ENCODE measurements at regions of chr18 and their contacts with region 1.

Region 1: GRCh38 chr18:79378542-79379250 is 17.0 kb upstream of the NFATC1 start:
- DNase-seq: peak; percentile 74
- ATAC-seq: peak; percentile 71
- H3K4me3 Mint-ChIP-seq: peak overlapping the region; percentile 46
- H3K27ac Mint-ChIP-seq: peak overlapping the region; percentile 50
- H3K4me1 Mint-ChIP-seq: peaks cover 26% of the 10 kb centered on the region
- H3K27me3 Mint-ChIP-seq: no peaks in the 10 kb centered on the region
- CTCF ChIP-seq: peak; percentile 81

Region 2: DNA sequence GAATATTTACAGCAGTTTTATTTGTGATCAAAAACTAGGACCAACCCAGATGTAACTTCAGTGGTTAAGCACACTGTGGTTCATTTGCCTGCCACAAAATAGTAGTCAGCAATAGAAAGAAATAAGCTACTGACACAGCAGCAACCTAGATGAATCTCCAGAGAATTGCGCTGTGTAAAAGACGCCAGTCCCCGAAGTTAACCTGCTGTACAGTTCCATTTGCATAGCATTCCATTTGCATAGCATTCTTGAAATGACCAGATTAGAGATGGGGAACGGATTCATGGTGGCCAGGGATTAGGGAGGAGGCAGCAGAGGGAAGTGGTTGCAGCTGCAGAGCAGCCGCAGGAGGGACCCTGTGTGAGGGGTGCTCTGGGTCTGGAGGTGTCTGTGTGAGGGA is 22.3 kb before region 1 on chr18:
- CTCF ChIA-PET with region 1: no interaction called
- POLR2A ChIA-PET with region 1: interaction called, 6 read pairs
- intact Hi-C with region 1: loop called (anchors 1 kb)
- DNase-seq: no peak
- ATAC-seq: peak; percentile 89
- H3K4me3 Mint-ChIP-seq: no peak overlapping the region
- H3K27ac Mint-ChIP-seq: peak overlapping the region; percentile 70
- H3K4me1 Mint-ChIP-seq: peaks cover 16% of the 10 kb centered on the region
- H3K27me3 Mint-ChIP-seq: no peaks in the 10 kb centered on the region
- CTCF ChIP-seq: no peak

Region 3: GRCh38 chr18:79484661-79485621 is 106.2 kb after region 1 on chr18:
- CTCF ChIA-PET with region 1: no interaction called
- POLR2A ChIA-PET with region 1: no interaction called
- intact Hi-C with region 1: no loop called
- DNase-seq: no peak
- ATAC-seq: no peak
- H3K4me3 Mint-ChIP-seq: no peak overlapping the region
- H3K27ac Mint-ChIP-seq: no peak overlapping the region
- H3K4me1 Mint-ChIP-seq: peaks cover 2% of the 10 kb centered on the region
- H3K27me3 Mint-ChIP-seq: no peaks in the 10 kb centered on the region
- CTCF ChIP-seq: no peak

Region 4: GRCh38 chr18:79523736-79524180 is 145.1 kb after region 1 on chr18:
- CTCF ChIA-PET with region 1: interaction called, 99 read pairs
- POLR2A ChIA-PET with region 1: interaction called, 5 read pairs
- intact Hi-C with region 1: loop called (anchors 1 kb)
- DNase-seq: no peak
- ATAC-seq: peak; percentile 63
- H3K4me3 Mint-ChIP-seq: peak overlapping the region; percentile 81
- H3K27ac Mint-ChIP-seq: peak overlapping the region; percentile 91
- H3K4me1 Mint-ChIP-seq: peaks cover 64% of the 10 kb centered on the region
- H3K27me3 Mint-ChIP-seq: no peaks in the 10 kb centered on the region
- CTCF ChIP-seq: no peak

Region 5: DNA sequence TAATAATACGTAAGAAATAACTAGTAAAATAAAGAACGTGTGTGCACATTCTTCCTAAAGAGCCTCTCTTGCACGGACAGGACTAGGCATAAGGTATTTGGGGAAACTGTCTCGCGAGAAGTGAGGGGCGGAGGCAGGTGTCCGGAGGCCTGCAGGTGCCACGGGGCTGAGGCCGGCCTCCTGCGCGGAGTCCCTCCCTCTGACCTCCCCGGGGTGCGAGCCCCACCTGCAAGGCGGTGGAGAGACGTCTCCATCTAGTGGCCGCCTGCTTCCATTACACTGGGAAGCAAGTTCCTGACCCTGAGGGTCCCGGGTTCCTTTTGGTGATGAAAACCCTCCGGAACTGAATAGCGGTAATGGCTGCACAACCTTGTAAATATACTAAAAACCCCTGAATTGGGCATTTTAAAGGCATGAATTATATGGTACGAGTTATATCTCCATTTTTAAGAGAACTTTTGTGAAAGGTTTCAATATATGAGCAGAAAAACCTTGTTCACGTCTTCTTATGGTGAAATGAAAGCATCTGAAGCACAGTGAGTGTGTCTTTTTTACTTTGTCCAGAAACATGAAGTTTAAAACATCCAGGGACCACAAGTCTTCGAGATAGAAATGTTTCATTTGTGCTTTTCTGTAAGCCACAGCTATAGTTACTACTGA is 265.4 kb after region 1 on chr18:
- CTCF ChIA-PET with region 1: interaction called, 86 read pairs
- POLR2A ChIA-PET with region 1: interaction called, 7 read pairs
- intact Hi-C with region 1: loop called (anchors 1 kb)
- DNase-seq: peak; percentile 68
- ATAC-seq: peak; percentile 93
- H3K4me3 Mint-ChIP-seq: no peak overlapping the region
- H3K27ac Mint-ChIP-seq: no peak overlapping the region
- H3K4me1 Mint-ChIP-seq: peaks cover 24% of the 10 kb centered on the region
- H3K27me3 Mint-ChIP-seq: no peaks in the 10 kb centered on the region
- CTCF ChIP-seq: peak; percentile 97

Region 6: DNA sequence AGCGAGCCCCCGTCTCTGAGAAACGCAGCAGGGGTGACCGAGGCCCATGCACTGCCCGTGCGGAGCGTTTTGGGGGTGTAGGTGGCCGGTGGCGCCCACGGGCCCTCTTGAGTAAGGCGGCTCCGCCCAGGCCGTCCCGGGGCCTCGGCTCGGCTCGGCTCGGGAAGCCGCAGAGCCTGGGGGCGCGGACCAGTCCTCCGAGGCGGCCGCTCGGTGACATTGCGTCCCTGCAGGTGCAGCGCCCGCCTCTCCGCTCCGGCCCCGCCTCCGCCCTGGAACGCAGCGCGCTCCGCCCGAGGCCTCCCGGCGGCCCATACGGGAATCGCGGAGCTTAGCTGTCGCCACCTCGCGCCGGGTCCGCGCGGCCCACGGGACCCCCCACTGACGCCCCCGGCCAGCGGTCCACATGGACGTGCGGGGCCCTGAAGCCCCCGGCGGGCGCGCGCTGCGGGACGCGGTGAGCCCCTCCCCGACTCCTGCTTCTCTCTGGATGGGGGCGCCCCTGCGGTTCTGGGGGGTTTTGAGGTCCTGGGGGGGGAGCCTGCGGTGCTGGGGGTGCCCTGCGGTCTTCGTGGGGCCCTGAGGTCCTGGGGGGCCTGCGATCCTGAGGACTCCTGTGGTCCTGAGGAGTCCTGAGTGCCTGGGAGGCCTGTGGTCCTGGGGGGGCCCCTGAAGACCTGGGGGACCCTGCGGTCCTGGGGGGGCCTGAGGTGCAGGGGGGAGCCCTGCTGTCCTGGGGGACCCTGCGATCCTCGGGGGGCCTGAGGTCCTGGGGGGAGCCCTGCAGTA is 585.8 kb after region 1 on chr18 and contains the start of gene HSBP1L1:
- CTCF ChIA-PET with region 1: no interaction called
- POLR2A ChIA-PET with region 1: no interaction called
- intact Hi-C with region 1: loop called (anchors 5 kb)
- DNase-seq: peak; percentile 56
- ATAC-seq: peak; percentile 83
- H3K4me3 Mint-ChIP-seq: peak within 1 kb of the TSS; percentile 74
- H3K27ac Mint-ChIP-seq: no peak within 1 kb of the TSS
- H3K4me1 Mint-ChIP-seq: peaks cover 37% of the 10 kb centered on the region
- H3K27me3 Mint-ChIP-seq: peaks cover 2% of the 10 kb centered on the region
- CTCF ChIP-seq: no peak
- total RNA-seq, gene HSBP1L1: 0.98 and 2.5 TPM in 2 replicates

Region 7: DNA sequence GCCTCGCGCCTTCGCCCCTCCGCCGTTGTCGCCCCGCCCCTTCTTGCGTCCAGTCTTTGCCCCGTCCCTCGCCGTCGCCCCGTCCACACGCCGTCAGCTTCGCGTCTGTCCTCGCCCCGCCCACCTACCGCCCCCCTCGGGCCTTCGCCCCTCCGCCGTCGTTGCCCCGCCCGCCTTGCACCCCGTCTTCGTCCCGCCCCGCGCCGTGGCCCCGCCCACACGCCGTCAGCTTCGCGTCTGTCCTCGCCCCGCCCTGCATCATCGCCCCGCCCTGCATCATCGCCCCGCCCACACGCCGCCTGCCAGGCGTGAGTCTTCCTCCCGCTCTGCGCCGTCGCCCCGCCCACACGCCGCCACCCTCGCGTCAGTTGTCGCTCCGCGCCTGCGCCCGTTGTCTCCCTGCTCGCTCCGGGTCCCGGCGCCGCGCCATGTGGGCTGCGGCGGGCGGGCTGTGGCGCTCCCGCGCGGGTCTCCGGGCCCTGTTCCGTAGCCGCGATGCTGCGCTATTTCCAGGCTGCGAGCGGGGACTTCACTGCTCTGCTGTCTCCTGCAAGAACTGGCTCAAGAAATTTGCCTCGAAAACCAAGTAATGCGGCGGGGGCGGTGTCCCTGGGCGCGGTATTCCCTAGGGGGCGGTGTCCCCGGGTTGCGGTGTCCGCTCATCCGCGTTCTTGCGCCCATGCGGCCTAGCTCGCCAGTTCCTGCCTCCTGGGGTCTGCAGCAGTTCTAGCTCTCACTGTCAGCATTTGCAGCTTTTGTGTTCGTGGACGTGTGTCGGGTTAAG is 655.6 kb after region 1 on chr18 and contains the start of gene RBFA:
- CTCF ChIA-PET with region 1: no interaction called
- POLR2A ChIA-PET with region 1: no interaction called
- intact Hi-C with region 1: loop called (anchors 1 kb)
- DNase-seq: peak; percentile 99
- ATAC-seq: peak; percentile 73
- H3K4me3 Mint-ChIP-seq: peak within 1 kb of the TSS; percentile 90
- H3K27ac Mint-ChIP-seq: peak within 1 kb of the TSS; percentile 93
- H3K4me1 Mint-ChIP-seq: peaks cover 24% of the 10 kb centered on the region
- H3K27me3 Mint-ChIP-seq: no peaks in the 10 kb centered on the region
- CTCF ChIP-seq: no peak
- total RNA-seq, gene RBFA: 21.6 and 23.3 TPM in 2 replicates

Region 8: GRCh38 chr18:80136679-80137078 is 758.0 kb after region 1 on chr18:
- CTCF ChIA-PET with region 1: no interaction called
- POLR2A ChIA-PET with region 1: no interaction called
- intact Hi-C with region 1: no loop called
- DNase-seq: no peak
- ATAC-seq: no peak
- H3K4me3 Mint-ChIP-seq: no peak overlapping the region
- H3K27ac Mint-ChIP-seq: no peak overlapping the region
- H3K4me1 Mint-ChIP-seq: no peaks in the 10 kb centered on the region
- H3K27me3 Mint-ChIP-seq: no peaks in the 10 kb centered on the region
- CTCF ChIP-seq: no peak

Measured in activated B cell treated with CpG ODN at 0.5 μM for 24 hours (primary cell).